GM10248 (cell line): ENCODE measurements at regions of chr7 and their contacts with region 1.

Region 1: GRCh38 chr7:30062591-30062990 is 34.4 kb downstream of the PLEKHA8 start:
- DNase-seq: peak; percentile 39
- CTCF ChIP-seq: peak; percentile 60

Region 2: GRCh38 chr7:29878081-29878688 is 184.4 kb before region 1 on chr7:
- CTCF ChIA-PET with region 1: interaction called, 14 read pairs
- POLR2A ChIA-PET with region 1: no interaction called
- DNase-seq: peak; percentile 37
- CTCF ChIP-seq: peak; percentile 56

Region 3: DNA sequence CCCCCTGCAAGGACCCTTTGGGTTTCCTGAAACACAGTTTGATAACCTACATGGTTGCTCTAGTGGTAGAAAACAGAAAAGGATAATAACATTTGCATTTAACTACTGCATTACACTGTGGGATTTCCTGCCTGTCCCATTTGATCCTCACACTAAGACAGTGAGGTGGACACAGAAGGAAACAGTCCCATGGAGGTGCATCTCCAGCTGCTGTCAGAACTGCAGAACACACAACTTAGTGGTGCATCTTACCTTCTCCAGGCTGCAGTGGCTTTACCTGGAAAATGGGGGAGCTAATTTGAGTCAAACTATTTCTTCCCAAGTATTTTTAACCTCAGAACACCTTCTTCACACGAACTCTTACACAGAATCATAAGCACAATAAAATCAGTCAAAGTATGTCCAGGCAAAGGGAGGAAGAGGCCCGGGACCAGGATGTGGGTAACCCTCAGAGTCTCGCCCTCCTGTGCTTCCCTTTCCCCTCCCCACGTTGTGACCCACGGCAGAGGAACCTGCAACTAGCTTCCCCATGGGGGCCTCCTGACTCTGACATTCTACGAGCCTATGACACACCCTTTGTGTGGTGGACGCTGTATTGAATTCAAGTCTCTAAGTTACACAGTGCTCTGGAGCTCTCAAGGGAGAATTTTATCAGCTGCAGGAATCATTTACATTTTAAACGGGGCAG is 106.6 kb before region 1 on chr7:
- CTCF ChIA-PET with region 1: interaction called, 14 read pairs
- POLR2A ChIA-PET with region 1: no interaction called
- DNase-seq: peak; percentile 35
- CTCF ChIP-seq: no peak

Region 4: DNA sequence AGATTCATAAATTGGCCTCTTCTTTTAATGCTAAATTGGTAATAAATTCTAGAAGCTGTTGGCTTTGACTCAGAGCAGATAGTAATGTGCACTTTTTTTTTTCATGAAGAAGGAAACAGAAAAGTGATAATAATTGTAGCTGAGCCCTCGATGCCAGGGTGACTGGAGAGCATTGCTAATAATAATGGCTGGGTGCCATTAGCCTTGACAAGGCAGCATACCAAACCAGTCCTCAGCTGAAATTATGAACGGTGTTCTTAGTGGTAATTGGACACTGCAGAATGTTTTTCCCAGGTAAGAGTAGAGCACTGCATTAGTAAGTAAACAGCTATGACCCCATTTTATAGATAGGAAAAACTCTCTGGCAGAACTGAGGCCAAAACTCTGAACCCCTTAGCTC is 15.5 kb before region 1 on chr7:
- CTCF ChIA-PET with region 1: interaction called, 18 read pairs
- POLR2A ChIA-PET with region 1: no interaction called
- DNase-seq: no peak
- CTCF ChIP-seq: no peak

Region 5: DNA sequence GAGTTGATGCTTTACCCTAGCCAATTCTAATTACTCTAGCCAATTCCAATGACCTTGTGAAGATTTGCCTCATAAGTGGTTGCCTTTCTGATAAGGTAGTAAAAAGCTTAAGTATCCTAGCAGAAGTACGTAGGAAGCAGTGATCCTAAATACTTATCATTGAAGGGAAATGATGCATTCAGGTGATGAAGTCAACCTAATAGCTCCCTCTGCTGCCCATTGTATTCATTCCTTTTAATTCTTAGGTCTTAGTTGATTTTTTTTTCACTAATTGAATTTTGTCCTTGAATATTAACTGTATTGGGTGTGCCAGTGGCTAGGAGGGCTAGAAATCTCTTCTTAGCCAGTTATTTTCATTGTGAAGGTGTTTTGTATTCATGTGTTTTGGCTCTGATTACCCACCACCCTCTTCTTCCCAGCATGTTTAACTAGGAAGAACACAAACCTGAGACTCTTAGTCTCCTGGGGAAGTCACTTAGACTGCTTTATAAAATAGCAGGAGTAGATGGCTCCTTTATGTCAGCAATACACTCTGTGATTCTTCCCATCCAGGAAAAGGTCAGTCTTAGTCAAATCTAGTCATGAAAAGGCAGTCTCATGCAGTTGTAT is 11.9 kb after region 1 on chr7:
- CTCF ChIA-PET with region 1: interaction called, 40 read pairs
- POLR2A ChIA-PET with region 1: no interaction called
- DNase-seq: no peak
- CTCF ChIP-seq: peak; percentile 48

Region 6: GRCh38 chr7:30105208-30105607 is 42.6 kb after region 1 on chr7:
- CTCF ChIA-PET with region 1: no interaction called
- POLR2A ChIA-PET with region 1: no interaction called
- DNase-seq: no peak
- CTCF ChIP-seq: no peak

Region 7: GRCh38 chr7:30134611-30135545 is 72.3 kb after region 1 on chr7 and contains the start of gene MTURN:
- CTCF ChIA-PET with region 1: no interaction called
- POLR2A ChIA-PET with region 1: no interaction called
- DNase-seq: peak; percentile 95
- CTCF ChIP-seq: no peak